AG04450 (cell line): ENCODE measurements at regions of chr12 and their contacts with region 1.

Region 1: GRCh38 chr12:104215638-104216297 is at the start of gene TXNRD1:
- DNase-seq: no peak
- H3K4me3 ChIP-seq: peak within 1 kb of the TSS; percentile 62
- H3K27ac ChIP-seq: peak within 1 kb of the TSS; percentile 31
- H3K27me3 ChIP-seq: no peaks in the 10 kb centered on the region
- CTCF ChIP-seq: peak; percentile 83
- polyA plus RNA-seq, gene TXNRD1: 673 and 740 TPM in 2 replicates

Region 2: GRCh38 chr12:104280703-104281458 is 65.1 kb after region 1 on chr12:
- CTCF ChIA-PET with region 1: no interaction called
- POLR2A ChIA-PET with region 1: interaction called, 96 read pairs
- DNase-seq: peak; percentile 85
- H3K4me3 ChIP-seq: peak overlapping the region; percentile 35
- H3K27ac ChIP-seq: peak overlapping the region; percentile 98
- H3K27me3 ChIP-seq: no peaks in the 10 kb centered on the region
- CTCF ChIP-seq: no peak

Region 3: GRCh38 chr12:104294845-104295688 is 79.3 kb after region 1 on chr12:
- CTCF ChIA-PET with region 1: interaction called, 5 read pairs
- POLR2A ChIA-PET with region 1: interaction called, 96 read pairs
- DNase-seq: no peak
- H3K4me3 ChIP-seq: peak overlapping the region; percentile 11; the same call in 1 of the 2 replicates
- H3K27ac ChIP-seq: no peak overlapping the region
- H3K27me3 ChIP-seq: no peaks in the 10 kb centered on the region
- CTCF ChIP-seq: no peak